ENCODE measurements at regions of chr12 and their contacts with region 1.

Region 1: GRCh38 chr12:68831272-68831671 is 23.3 kb downstream of the MDM2 start:
- DNase-seq: no peak
- ATAC-seq: no peak
- H3K4me3 ChIP-seq: no peak overlapping the region
- H3K4me3 Mint-ChIP-seq: no peak overlapping the region
- H3K27ac ChIP-seq: no peak overlapping the region
- H3K27ac Mint-ChIP-seq: no peak overlapping the region
- H3K4me1 ChIP-seq: no peaks in the 10 kb centered on the region
- H3K4me1 Mint-ChIP-seq: peaks cover 8% of the 10 kb centered on the region
- H3K27me3 ChIP-seq: no peaks in the 10 kb centered on the region
- H3K27me3 Mint-ChIP-seq: no peaks in the 10 kb centered on the region
- CTCF ChIP-seq: no peak

Region 2: GRCh38 chr12:67811437-67812361 is 1019.6 kb before region 1 on chr12:
- CTCF ChIA-PET with region 1: no interaction called
- POLR2A ChIA-PET with region 1: no interaction called
- intact Hi-C with region 1: no loop called
- DNase-seq: no peak
- ATAC-seq: no peak
- H3K4me3 ChIP-seq: no peak overlapping the region
- H3K4me3 Mint-ChIP-seq: no peak overlapping the region
- H3K27ac ChIP-seq: no peak overlapping the region
- H3K27ac Mint-ChIP-seq: no peak overlapping the region
- H3K4me1 ChIP-seq: no peaks in the 10 kb centered on the region
- H3K4me1 Mint-ChIP-seq: peaks cover 2% of the 10 kb centered on the region
- H3K27me3 ChIP-seq: no peaks in the 10 kb centered on the region
- H3K27me3 Mint-ChIP-seq: no peaks in the 10 kb centered on the region
- CTCF ChIP-seq: no peak

Region 3: DNA sequence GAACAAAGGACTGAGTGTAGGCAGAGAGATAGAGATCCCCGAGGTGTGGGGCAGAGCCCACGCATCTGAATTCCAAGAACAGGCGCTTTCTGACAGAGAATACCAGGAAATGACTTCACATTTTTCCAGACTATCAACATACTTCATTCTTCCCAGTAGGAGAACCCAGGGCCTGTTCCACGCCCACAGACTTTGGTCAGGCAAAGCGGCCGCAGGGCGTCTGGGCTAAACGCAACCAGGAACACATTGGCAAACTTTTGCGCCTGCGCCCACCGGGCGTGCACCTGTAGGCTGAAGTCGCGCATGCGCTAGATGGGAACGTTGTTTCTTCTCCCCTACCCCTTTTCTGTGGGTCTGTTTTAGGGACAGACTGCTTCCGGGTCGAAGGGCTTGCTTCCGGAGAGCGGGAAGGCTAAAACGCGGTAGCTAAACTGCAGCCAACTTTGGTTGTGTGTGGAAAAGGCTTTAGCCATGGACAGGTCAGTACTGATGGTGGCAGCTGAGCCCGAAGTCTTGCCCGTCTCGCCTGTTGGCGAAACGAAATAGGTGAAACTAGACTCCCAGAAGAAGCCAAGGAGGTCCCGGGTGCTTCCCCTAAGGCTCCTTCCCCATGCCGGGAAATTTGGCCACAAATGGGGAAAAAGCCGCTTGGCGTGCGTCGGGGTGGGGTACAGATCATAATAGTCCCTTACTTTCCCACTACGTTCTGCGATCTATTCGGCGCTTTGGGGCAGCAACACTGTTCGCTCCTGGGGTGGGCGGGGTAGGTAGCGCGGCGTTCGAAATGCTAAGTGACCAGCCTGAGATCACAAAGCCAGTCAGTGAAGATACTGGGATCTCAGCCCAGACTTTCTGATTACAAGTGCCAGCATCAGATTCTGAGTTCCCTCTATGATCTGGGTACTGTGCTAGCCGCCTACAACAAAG is 144.4 kb before region 1 on chr12 and contains the start of gene NUP107:
- CTCF ChIA-PET with region 1: no interaction called
- POLR2A ChIA-PET with region 1: no interaction called
- intact Hi-C with region 1: no loop called
- DNase-seq: peak; percentile 95 to 99 (median 98)
- ATAC-seq: peak; percentile 96
- H3K4me3 ChIP-seq: peak within 1 kb of the TSS; percentile 91
- H3K4me3 Mint-ChIP-seq: peak within 1 kb of the TSS; percentile 99
- H3K27ac ChIP-seq: peak within 1 kb of the TSS; percentile 73 to 78
- H3K27ac Mint-ChIP-seq: peak within 1 kb of the TSS; percentile 100
- H3K4me1 ChIP-seq: peaks cover 24% of the 10 kb centered on the region
- H3K4me1 Mint-ChIP-seq: peaks cover 41% of the 10 kb centered on the region
- H3K27me3 ChIP-seq: no peaks in the 10 kb centered on the region
- H3K27me3 Mint-ChIP-seq: no peaks in the 10 kb centered on the region
- CTCF ChIP-seq: no peak
- total RNA-seq, gene NUP107: 40.1 to 45.9 TPM

Region 4: DNA sequence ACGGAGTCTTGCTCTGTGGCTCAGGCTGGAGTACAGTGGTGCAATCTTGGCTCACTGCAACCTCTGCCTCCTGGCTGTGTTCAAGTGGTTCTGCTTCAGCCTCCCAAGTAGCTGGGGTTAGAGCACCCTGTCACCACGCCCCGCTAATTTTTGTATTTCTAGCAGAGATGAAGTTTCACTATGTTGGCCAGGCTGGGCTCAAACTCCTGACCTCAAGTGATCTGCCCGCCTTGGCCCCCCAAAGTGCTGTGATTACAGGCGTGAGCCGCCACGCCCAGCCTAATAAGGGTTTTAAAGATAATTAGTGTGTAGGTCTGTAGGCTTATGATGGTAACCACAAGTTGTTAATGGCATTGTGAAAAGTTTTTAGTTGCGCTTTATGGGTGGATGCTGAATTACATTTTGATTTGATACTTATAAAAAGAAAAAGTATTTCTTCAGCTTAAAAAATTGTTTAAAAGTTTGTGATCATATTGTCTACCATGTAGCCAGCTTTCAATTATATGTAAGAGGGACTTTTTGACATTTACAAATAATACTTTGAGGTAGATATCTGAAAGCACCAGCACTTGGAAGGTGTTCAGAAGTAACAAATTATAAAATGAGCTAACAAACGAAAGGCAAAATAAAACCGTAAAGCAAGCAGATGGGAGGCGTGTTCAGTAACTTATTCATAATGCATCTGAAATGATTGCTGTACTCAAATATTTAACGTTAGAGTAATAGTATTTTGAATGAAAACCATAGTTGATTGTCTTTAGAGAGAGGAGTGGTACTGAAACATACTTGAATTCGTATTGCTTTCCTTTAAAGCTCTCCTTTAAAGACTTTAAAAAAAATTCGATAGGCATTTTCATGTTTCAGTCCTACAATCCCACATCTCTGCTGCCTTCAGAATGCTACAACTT is 13.8 kb after region 1 on chr12:
- CTCF ChIA-PET with region 1: interaction called, 17 read pairs
- POLR2A ChIA-PET with region 1: interaction called, 3 read pairs
- intact Hi-C with region 1: no loop called
- DNase-seq: no peak
- ATAC-seq: no peak
- H3K4me3 ChIP-seq: no peak overlapping the region
- H3K4me3 Mint-ChIP-seq: no peak overlapping the region
- H3K27ac ChIP-seq: no peak overlapping the region
- H3K27ac Mint-ChIP-seq: no peak overlapping the region
- H3K4me1 ChIP-seq: no peaks in the 10 kb centered on the region
- H3K4me1 Mint-ChIP-seq: peaks cover 2% of the 10 kb centered on the region
- H3K27me3 ChIP-seq: no peaks in the 10 kb centered on the region
- H3K27me3 Mint-ChIP-seq: no peaks in the 10 kb centered on the region
- CTCF ChIP-seq: no peak

Region 5: DNA sequence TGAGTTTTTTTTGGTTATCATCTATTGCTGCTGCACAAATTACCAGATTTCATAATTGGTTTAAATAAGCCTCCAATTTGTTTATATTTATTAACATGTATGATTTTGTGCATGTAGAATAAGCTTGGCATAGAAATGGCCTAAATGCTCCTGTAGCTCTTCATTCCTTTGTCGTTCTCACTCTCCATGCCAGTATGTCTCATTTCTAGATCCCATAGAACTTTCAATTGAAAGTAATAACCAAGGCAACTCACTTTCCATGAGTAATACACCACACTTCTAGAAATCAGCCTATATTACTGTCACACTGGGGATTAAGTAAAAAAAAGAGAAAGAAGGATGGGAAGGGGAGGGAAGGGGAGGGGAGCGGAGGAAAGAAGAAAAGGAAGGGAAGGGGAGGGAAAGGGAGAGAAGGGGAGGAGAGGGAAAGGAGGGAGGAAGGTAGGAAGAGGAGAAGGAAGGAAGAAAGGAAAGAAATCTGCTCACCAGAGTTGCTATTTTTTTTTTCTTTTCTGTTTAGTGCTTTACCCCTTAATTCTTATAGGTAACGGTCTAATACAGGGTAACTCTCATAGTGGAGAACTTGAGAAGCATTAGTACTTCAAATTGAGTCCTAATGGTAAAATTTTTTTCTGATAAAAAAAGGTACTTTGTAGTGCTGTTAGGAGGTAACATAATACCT is 22.3 kb after region 1 on chr12:
- CTCF ChIA-PET with region 1: interaction called, 10 read pairs
- POLR2A ChIA-PET with region 1: interaction called, 3 read pairs
- intact Hi-C with region 1: no loop called
- DNase-seq: no peak
- ATAC-seq: no peak
- H3K4me3 ChIP-seq: no peak overlapping the region
- H3K4me3 Mint-ChIP-seq: no peak overlapping the region
- H3K27ac ChIP-seq: no peak overlapping the region
- H3K27ac Mint-ChIP-seq: no peak overlapping the region
- H3K4me1 ChIP-seq: no peaks in the 10 kb centered on the region
- H3K4me1 Mint-ChIP-seq: no peaks in the 10 kb centered on the region
- H3K27me3 ChIP-seq: no peaks in the 10 kb centered on the region
- H3K27me3 Mint-ChIP-seq: peaks cover 2% of the 10 kb centered on the region
- CTCF ChIP-seq: no peak